ENCODE measurements at regions of chr22 and their contacts with region 1.

Region 1: DNA sequence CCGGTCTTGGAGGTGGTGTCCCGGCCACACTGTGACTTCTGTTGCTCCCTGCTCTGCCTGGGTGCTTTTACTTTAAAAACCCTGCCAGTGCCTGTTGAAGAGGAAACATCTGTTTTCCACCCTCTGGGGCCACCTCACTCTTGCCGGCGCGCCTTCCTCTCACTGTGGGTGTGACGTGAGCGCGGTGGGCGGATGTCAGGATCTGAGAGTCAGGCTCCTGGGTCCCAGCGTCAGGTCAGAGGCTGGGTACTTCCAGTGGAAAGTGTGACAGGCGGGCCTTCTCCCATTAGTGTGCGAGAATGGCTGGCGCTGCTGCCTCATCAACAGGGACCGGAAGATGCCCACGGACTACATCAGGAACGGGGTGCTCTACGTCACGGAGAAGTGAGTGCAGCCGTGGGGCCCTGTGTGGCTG is 54.2 kb downstream of the GRAMD4 start:
- DNase-seq: peak; percentile 99
- ATAC-seq: peak; percentile 94
- H3K4me3 Mint-ChIP-seq: peak overlapping the region; percentile 85
- H3K27ac Mint-ChIP-seq: peak overlapping the region; percentile 96
- H3K4me1 Mint-ChIP-seq: peaks cover 49% of the 10 kb centered on the region
- H3K27me3 Mint-ChIP-seq: no peaks in the 10 kb centered on the region

Region 2: DNA sequence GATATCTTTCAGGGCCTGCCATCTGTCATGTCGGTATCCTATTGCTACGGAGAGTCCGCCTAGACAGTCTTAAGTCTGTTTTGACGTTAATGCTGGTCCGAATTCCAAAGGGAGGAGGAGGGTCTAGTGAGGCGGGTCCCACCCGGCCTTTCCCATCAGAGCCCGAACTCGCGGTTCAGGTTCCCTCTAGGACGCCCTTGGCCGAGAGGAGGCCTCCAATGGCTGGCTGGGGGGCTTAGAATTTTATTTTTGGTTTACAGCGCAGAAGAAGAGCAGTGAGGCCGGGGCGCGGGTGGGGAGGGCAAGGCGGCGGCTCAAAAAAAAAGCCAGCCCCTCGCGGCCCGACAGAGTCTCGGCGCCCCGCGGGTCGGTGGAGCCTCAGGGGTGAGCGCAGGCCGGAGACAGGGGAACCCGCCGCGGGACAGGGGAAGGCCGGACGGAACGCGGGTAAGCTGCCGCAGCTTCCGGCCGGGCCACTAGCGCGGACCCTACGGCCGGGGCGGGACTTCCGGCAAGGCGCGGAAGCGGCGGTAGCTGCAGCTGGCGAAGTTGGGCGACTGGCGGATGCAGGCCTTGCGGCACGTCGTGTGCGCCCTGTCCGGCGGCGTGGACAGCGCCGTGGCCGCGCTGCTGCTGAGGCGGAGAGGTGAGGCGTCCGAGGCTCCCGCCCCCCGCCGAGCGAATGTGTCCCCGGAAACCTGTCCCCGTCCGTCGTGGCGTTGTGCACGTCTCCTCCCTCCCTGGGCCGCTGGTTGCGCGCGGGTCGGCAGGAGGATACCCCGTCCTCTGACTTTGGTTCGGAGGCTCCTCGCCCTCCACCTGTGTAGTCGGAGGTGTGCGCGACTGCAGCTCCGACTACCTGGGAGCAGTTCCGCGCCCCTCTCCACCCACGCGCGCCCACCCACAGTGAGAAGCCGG is 338.9 kb before region 1 on chr22 and contains the start of gene TRMU:
- CTCF ChIA-PET with region 1: no interaction called
- POLR2A ChIA-PET with region 1: no interaction called
- intact Hi-C with region 1: loop called in 1 of 2 experiments (anchors 1 kb)
- DNase-seq: peak; percentile 86
- ATAC-seq: peak; percentile 89
- H3K4me3 Mint-ChIP-seq: peak within 1 kb of the TSS; percentile 99
- H3K27ac Mint-ChIP-seq: peak within 1 kb of the TSS; percentile 94
- H3K4me1 Mint-ChIP-seq: peaks cover 35% of the 10 kb centered on the region
- H3K27me3 Mint-ChIP-seq: no peaks in the 10 kb centered on the region
- total RNA-seq, gene TRMU: 61.4 to 75.3 TPM

Region 3: DNA sequence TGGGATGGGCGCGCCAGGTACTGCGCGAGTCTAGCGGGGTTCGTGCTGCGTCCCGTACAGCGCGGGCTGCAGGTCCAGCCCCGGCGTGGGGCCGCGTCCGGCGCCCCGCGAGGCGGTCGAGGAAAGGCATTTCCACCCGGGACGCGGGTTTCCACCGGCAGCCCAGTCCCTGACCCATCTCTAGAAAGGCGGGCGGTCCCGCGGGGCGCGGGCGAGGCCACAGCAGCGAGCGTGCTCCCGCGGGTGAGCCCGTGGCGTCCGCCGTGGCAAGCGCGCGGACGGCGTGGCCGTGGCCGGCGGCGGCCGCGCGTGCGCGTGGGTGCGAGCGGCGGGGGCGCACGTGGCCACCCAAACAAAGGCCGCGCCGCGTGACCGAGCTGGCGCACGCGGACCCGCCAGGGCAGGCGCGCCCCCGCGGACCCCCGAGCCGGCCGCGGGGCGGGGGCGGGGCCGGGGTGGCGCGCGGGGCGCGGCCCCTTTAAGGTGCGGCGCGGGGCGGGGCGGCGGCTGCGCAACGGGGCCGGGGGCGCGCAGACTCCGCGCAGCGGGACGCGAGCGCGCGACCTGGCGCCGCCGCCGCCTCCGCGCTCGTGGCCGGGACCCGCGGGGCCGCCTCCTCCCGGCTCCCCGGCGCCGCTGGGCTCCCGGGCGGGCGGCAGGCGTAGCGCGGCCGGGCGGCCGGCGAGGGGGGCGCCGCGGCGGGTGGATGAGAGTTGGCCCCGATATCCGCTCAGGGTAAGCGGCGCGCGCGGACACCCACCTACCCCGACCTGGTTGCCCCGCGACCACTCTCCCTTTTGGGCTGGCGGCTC is 97.6 kb before region 1 on chr22:
- CTCF ChIA-PET with region 1: no interaction called
- POLR2A ChIA-PET with region 1: no interaction called
- intact Hi-C with region 1: loop called (anchors 1 to 2 kb)
- DNase-seq: peak; percentile 72
- ATAC-seq: peak; percentile 72
- H3K4me3 Mint-ChIP-seq: peak overlapping the region; percentile 73
- H3K27ac Mint-ChIP-seq: no peak overlapping the region
- H3K4me1 Mint-ChIP-seq: peaks cover 38% of the 10 kb centered on the region
- H3K27me3 Mint-ChIP-seq: no peaks in the 10 kb centered on the region

Region 4: DNA sequence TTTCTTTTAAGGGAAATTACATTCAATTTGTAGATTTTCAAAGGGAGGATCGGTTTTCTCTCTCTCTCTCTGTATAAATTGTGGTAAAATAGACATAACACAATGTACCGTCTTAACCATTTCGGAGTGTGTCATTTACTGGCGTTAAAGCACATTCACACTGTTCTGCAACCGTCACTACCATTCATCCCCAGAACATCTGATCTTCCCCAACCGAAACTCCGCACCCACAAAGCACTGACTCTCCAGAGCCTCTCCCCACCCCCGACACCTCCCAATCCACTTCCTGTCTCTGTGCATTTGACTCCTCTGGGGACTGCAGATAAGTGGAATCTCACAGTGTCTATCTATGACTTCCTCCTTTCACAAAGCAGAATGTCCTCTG is 70.1 kb before region 1 on chr22:
- CTCF ChIA-PET with region 1: no interaction called
- POLR2A ChIA-PET with region 1: no interaction called
- intact Hi-C with region 1: loop called (anchors 1 kb)
- DNase-seq: peak; percentile 91
- ATAC-seq: peak; percentile 99
- H3K4me3 Mint-ChIP-seq: peak overlapping the region; percentile 64
- H3K27ac Mint-ChIP-seq: peak overlapping the region; percentile 99
- H3K4me1 Mint-ChIP-seq: peaks cover 16% of the 10 kb centered on the region
- H3K27me3 Mint-ChIP-seq: no peaks in the 10 kb centered on the region

Region 5: GRCh38 chr22:46638601-46639431 is 35.6 kb before region 1 on chr22:
- CTCF ChIA-PET with region 1: no interaction called
- POLR2A ChIA-PET with region 1: no interaction called
- intact Hi-C with region 1: no loop called
- DNase-seq: no peak
- ATAC-seq: no peak
- H3K4me3 Mint-ChIP-seq: no peak overlapping the region
- H3K27ac Mint-ChIP-seq: peak overlapping the region; percentile 47
- H3K4me1 Mint-ChIP-seq: peaks cover 3% of the 10 kb centered on the region
- H3K27me3 Mint-ChIP-seq: no peaks in the 10 kb centered on the region

Region 6: DNA sequence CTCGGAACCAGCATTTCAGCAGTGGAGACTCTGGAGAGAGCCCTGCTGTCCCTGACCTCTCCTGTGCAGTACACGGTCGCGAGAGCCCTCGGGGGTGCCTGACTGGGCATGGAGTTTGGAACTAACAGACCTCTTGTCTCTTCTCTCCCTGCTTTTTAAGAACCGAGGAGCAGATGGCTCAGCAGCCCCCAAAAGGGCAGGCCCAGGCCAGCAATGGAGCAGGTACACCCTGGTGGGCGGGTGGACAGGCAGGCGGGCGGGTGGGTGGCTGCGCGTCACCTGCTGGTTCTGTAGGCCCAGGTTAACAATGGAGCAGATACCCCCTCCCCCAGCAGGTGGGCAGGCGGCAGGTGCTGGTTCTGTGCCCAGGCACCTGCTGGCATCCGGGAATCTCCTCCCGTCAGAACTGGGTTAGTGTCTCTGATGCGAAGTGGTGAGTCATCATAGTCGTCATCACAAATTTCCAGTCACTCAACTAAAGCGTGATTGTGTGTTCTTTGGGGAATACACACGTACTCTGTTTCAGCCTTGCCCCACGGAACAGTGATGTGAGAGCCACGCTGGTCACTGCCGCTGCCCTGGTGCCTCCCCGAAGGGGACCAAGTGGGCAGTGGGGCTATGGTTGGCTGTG is 13.0 kb before region 1 on chr22:
- CTCF ChIA-PET with region 1: interaction called, 4 read pairs
- POLR2A ChIA-PET with region 1: no interaction called
- intact Hi-C with region 1: loop called (anchors 1 to 2 kb)
- DNase-seq: peak; percentile 79
- ATAC-seq: peak; percentile 91
- H3K4me3 Mint-ChIP-seq: peak overlapping the region; percentile 21
- H3K27ac Mint-ChIP-seq: peak overlapping the region; percentile 91
- H3K4me1 Mint-ChIP-seq: peaks cover 21% of the 10 kb centered on the region
- H3K27me3 Mint-ChIP-seq: no peaks in the 10 kb centered on the region

Region 7: GRCh38 chr22:46762238-46763050 is 88.1 kb after region 1 on chr22 and contains the start of gene TBC1D22A:
- CTCF ChIA-PET with region 1: interaction called, 3 read pairs
- POLR2A ChIA-PET with region 1: no interaction called
- intact Hi-C with region 1: loop called in 1 of 2 experiments (anchors 1 kb)
- DNase-seq: peak; percentile 97
- ATAC-seq: peak; percentile 90
- H3K4me3 Mint-ChIP-seq: peak within 1 kb of the TSS; percentile 94
- H3K27ac Mint-ChIP-seq: peak within 1 kb of the TSS; percentile 99
- H3K4me1 Mint-ChIP-seq: peaks cover 58% of the 10 kb centered on the region
- H3K27me3 Mint-ChIP-seq: no peaks in the 10 kb centered on the region
- total RNA-seq, gene TBC1D22A: 36.0 to 38.0 TPM